ENCODE measurements at regions of chr5 and their contacts with region 1.

Region 1: GRCh38 chr5:127492854-127493738 is 24.3 kb upstream of the PRRC1 start:
- DNase-seq: no peak
- H3K4me3 ChIP-seq: no peak overlapping the region
- H3K27ac ChIP-seq: no peak overlapping the region
- H3K4me1 ChIP-seq: no peaks in the 10 kb centered on the region
- H3K27me3 ChIP-seq: no peaks in the 10 kb centered on the region
- CTCF ChIP-seq: peak in 2 of 3 experiments; percentile 44 to 72; a peak in 3 of 4 replicates
- EP300 ChIP-seq: no peak
- POLR2A ChIP-seq: no peak
- RAD21 ChIP-seq: peak; percentile 41 to 42; a peak in 3 of 4 replicates

Region 2: GRCh38 chr5:127296321-127296720 is 196.8 kb before region 1 on chr5:
- CTCF ChIA-PET with region 1: interaction called, 17 read pairs
- POLR2A ChIA-PET with region 1: no interaction called
- DNase-seq: no peak
- H3K4me3 ChIP-seq: no peak overlapping the region
- H3K27ac ChIP-seq: no peak overlapping the region
- H3K4me1 ChIP-seq: peaks cover 1 to 27% (median 24%) of the 10 kb centered on the region in 4 experiments; a peak in 5 of 7 replicates
- H3K27me3 ChIP-seq: no peaks in the 10 kb centered on the region
- CTCF ChIP-seq: no peak
- EP300 ChIP-seq: no peak
- POLR2A ChIP-seq: no peak
- RAD21 ChIP-seq: no peak

Region 3: GRCh38 chr5:127396490-127397155 is 96.5 kb before region 1 on chr5:
- CTCF ChIA-PET with region 1: interaction called, 18 read pairs
- POLR2A ChIA-PET with region 1: no interaction called
- DNase-seq: no peak
- H3K4me3 ChIP-seq: no peak overlapping the region
- H3K27ac ChIP-seq: no peak overlapping the region
- H3K4me1 ChIP-seq: no peaks in the 10 kb centered on the region; a peak in 2 of 7 replicates
- H3K27me3 ChIP-seq: no peaks in the 10 kb centered on the region
- CTCF ChIP-seq: peak; percentile 4 to 48 (median 32); a peak in 3 of 4 replicates
- EP300 ChIP-seq: no peak
- POLR2A ChIP-seq: no peak
- RAD21 ChIP-seq: peak; percentile 40 to 54

Region 4: GRCh38 chr5:127505905-127506304 is 12.8 kb after region 1 on chr5:
- CTCF ChIA-PET with region 1: interaction called, 38 read pairs
- POLR2A ChIA-PET with region 1: no interaction called
- DNase-seq: no peak
- H3K4me3 ChIP-seq: no peak overlapping the region
- H3K27ac ChIP-seq: no peak overlapping the region
- H3K4me1 ChIP-seq: no peaks in the 10 kb centered on the region; a peak in 1 of 7 replicates
- H3K27me3 ChIP-seq: no peaks in the 10 kb centered on the region
- CTCF ChIP-seq: no peak
- EP300 ChIP-seq: no peak
- POLR2A ChIP-seq: no peak
- RAD21 ChIP-seq: no peak

Region 5: DNA sequence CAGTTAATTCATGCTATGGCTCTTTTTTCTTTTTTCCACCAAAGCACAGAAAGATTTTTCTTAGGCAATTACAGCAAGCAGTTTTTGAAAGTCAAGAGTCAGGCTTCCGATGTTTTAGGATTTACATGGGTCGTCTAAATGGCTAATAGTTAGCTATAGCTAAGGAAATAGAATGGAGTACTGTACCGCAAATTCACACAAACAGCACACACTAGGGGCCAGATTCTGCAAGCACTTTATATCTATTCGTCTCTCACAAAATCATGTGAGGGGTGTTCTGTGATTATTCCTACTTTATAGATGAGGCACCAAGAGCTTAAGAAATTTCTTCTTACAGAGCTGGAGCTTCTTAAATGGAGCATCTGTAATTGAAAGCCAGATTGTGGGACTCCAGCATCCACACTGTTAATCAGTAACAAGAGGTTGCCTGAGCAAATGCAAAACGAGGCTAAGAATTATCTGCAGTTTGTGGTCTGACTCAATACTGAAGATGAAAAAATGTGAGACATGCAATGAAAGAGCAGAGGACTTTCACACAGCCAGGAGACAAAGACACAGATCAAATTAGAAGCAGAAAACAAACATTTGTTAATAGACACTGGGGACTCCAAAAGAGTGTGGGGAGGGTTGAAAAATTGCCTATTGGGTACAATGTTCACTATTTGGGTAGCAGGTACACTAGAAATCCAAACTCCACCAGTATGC is 93.1 kb after region 1 on chr5:
- CTCF ChIA-PET with region 1: no interaction called
- POLR2A ChIA-PET with region 1: no interaction called
- DNase-seq: no peak
- H3K4me3 ChIP-seq: no peak overlapping the region
- H3K27ac ChIP-seq: no peak overlapping the region
- H3K4me1 ChIP-seq: peaks cover 3 to 13% (median 5%) of the 10 kb centered on the region in 4 experiments; a peak in 6 of 7 replicates
- H3K27me3 ChIP-seq: no peaks in the 10 kb centered on the region
- CTCF ChIP-seq: no peak
- EP300 ChIP-seq: no peak
- POLR2A ChIP-seq: no peak
- RAD21 ChIP-seq: no peak

Region 6: DNA sequence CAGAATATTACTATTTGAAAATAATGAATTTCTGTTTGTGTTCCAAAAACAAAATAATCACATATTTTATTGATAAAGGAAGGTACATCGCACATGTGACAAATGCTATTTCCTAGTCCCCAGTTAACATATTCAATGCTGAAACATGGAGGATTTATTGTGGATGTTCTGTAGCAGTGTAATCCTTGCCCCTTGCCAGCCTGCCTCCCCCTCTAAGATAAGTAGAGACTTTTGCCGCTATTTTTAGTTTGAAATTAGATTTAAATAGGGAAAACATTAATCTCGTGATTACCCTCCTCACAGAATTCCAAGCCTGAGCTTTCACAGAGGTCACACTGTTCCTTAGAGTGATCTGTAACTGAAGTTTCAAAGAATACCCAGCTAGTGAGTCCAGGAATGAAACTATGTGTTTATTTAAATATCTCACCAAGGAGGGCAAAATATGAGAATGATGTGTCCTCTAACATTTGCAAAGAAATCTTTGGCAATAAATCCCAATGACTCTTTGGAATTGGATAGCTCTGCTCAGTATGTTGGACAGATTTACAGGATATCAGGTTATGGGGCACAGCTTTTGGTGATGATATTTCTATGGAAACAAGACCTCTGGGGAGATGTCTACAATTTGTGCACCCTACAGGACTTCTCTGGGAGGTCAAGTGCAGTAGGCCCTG is 173.1 kb after region 1 on chr5:
- CTCF ChIA-PET with region 1: no interaction called
- POLR2A ChIA-PET with region 1: no interaction called
- DNase-seq: no peak
- H3K4me3 ChIP-seq: no peak overlapping the region
- H3K27ac ChIP-seq: no peak overlapping the region
- H3K4me1 ChIP-seq: no peaks in the 10 kb centered on the region; a peak in 1 of 7 replicates
- H3K27me3 ChIP-seq: peaks cover 0 to 1% (median 0%) of the 10 kb centered on the region in 4 experiments; a peak in 1 of 7 replicates
- CTCF ChIP-seq: no peak
- EP300 ChIP-seq: no peak
- POLR2A ChIP-seq: no peak
- RAD21 ChIP-seq: no peak

Measured in H1 (cell line).